AG04450 (cell line): ENCODE measurements at regions of chr9 and their contacts with region 1.

Region 1: GRCh38 chr9:71819115-71819739 is 50.9 kb upstream of the CEMIP2 start:
- DNase-seq: no peak
- H3K4me3 ChIP-seq: no peak overlapping the region
- H3K27ac ChIP-seq: no peak overlapping the region
- H3K27me3 ChIP-seq: peaks cover 3% of the 10 kb centered on the region
- CTCF ChIP-seq: peak; percentile 78

Region 2: DNA sequence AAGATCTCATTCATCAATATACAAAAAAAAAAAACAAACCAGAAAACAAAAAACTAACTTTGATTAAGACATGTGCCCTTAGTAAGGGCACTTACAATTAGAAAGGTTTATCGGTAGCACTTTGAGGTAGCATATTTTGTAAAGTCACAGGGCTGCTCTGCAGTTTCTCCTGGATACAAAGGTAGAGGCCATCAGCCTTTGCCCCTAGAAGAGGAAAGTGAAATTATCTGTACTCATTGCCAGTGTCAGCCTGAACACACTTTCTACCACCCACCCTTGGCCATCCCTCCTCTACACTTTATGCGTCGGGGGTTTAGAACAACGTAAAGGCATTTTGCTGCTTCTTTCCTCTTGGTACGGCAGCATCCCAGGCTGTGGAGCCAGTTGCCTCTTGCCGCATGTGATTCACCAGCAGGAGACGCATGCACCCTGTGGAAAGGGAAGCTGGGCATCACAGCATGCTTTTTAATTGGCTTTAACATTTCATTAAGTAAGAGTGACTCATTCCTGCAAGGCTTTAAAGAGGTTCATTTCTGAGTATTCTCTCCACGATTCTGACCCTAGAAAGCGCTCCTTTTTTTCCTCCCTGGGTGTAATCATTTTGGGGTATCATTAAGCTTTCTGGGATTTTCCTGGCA is 135.5 kb before region 1 on chr9:
- CTCF ChIA-PET with region 1: interaction called, 15 read pairs
- POLR2A ChIA-PET with region 1: no interaction called
- DNase-seq: no peak
- H3K4me3 ChIP-seq: no peak overlapping the region
- H3K27ac ChIP-seq: no peak overlapping the region
- H3K27me3 ChIP-seq: no peaks in the 10 kb centered on the region
- CTCF ChIP-seq: peak; percentile 40

Region 3: DNA sequence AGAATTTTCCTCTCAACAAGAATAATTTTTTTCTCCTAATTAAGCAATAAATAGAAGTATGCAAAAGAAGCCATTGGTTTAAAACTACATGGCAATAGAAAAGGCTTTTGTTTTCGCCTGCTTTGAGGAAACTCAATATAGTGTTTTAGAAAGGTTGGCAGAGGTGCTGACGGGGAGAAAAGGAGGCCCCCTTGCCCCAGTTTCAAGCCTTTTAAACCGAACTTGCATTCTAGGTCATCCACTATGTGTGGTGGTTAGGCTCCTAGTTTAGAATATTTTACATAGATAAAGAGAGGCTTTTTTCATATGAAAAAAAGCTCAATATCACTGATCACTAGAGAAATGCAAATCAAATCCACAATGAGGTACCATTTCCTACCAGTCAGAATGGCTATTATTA is 17.4 kb before region 1 on chr9:
- CTCF ChIA-PET with region 1: interaction called, 98 read pairs
- POLR2A ChIA-PET with region 1: no interaction called
- DNase-seq: no peak
- H3K4me3 ChIP-seq: no peak overlapping the region
- H3K27ac ChIP-seq: no peak overlapping the region
- H3K27me3 ChIP-seq: peaks cover 2% of the 10 kb centered on the region
- CTCF ChIP-seq: no peak

Region 4: DNA sequence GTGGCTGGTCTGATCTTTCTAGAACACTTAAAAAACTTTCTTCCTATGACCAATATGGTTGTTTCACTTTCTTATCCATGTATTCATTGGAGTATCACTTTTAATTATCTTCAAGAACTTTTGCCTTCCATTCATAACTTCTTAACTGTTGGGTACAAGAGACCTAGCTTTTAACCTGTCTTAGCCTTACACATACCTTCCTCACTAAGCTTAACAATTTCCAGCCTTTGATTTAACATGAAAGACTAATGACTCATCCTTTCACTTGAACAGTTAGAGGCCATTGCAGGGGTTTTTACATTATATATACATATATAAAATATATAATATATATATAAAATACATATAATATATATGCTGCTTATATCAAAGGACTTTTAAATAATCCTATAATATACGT is 33.9 kb after region 1 on chr9:
- CTCF ChIA-PET with region 1: interaction called, 17 read pairs
- POLR2A ChIA-PET with region 1: no interaction called
- DNase-seq: no peak
- H3K4me3 ChIP-seq: no peak overlapping the region
- H3K27ac ChIP-seq: no peak overlapping the region
- H3K27me3 ChIP-seq: no peaks in the 10 kb centered on the region
- CTCF ChIP-seq: no peak

Region 5: GRCh38 chr9:71975833-71976232 is 156.6 kb after region 1 on chr9:
- CTCF ChIA-PET with region 1: interaction called, 10 read pairs
- POLR2A ChIA-PET with region 1: no interaction called
- DNase-seq: no peak
- H3K4me3 ChIP-seq: no peak overlapping the region
- H3K27ac ChIP-seq: no peak overlapping the region
- H3K27me3 ChIP-seq: no peaks in the 10 kb centered on the region
- CTCF ChIP-seq: 0 out of 2 replicates have a peak, but pooled peaks have one; percentile 16

Region 6: GRCh38 chr9:72315510-72316311 is 496.5 kb after region 1 on chr9:
- CTCF ChIA-PET with region 1: interaction called, 11 read pairs
- POLR2A ChIA-PET with region 1: no interaction called
- DNase-seq: no peak
- H3K4me3 ChIP-seq: no peak overlapping the region
- H3K27ac ChIP-seq: peak overlapping the region; percentile 22
- H3K27me3 ChIP-seq: no peaks in the 10 kb centered on the region
- CTCF ChIP-seq: no peak